Activated CD4-positive, alpha-beta T cell treated with anti-CD3 and anti-CD28 coated beads for 36 hours (primary cell): ENCODE measurements at regions of chr19 and their contacts with region 1.

Region 1: GRCh38 chr19:11558881-11559828 is at the start of gene ELOF1:
- DNase-seq: peak; percentile 99
- ATAC-seq: peak; percentile 93
- H3K4me3 Mint-ChIP-seq: peak within 1 kb of the TSS; percentile 90
- H3K27ac Mint-ChIP-seq: peak within 1 kb of the TSS; percentile 94
- H3K4me1 Mint-ChIP-seq: peaks cover 44% of the 10 kb centered on the region
- H3K27me3 Mint-ChIP-seq: no peaks in the 10 kb centered on the region
- total RNA-seq, gene ELOF1: 48.0 to 53.7 TPM

Region 2: DNA sequence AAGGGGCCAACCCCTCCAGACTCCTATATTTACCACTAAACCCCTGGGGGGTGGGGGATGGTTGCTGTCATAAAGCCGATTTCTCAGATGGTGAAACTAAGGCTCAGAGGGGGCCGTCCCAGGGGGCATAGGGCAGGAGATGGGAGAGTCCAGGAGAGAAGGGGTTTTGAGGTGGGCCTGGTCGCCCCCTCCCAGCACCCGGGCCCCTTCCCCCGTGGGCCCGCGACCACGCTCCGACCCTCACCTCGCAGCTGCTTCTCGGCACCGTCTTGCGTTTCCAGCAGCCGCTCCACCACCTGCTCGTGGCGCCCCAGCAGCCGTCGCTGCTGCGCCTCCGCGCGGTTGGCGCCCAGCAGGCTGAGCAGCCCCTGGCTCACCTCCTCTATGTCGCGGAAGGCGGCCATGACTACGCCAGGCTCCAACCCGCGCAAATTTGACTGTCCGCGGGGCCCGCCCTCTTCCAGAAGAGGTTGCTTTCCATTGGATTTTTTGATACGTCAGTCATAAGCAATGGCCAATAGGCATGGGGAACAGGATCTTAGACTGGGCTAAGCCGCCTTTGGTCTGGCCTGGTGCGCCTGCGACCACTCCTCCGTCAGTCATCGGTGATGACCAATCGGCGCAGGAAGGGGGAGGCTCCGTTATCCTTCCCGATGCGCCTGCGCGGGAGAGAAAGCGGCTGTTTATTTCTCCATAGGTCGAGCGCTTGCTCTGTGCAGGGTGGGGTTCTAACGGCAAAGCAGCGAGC is 403.6 kb before region 1 on chr19 and contains the start of gene SPC24:
- CTCF ChIA-PET with region 1: no interaction called
- POLR2A ChIA-PET with region 1: no interaction called
- intact Hi-C with region 1: loop called in 1 of 2 experiments (anchors 2 kb)
- DNase-seq: peak; percentile 97
- ATAC-seq: peak; percentile 99
- H3K4me3 Mint-ChIP-seq: peak within 1 kb of the TSS; percentile 79
- H3K27ac Mint-ChIP-seq: peak within 1 kb of the TSS; percentile 80
- H3K4me1 Mint-ChIP-seq: peaks cover 12% of the 10 kb centered on the region
- H3K27me3 Mint-ChIP-seq: no peaks in the 10 kb centered on the region
- total RNA-seq, gene SPC24: 59.6 to 72.2 TPM

Region 3: GRCh38 chr19:11355160-11356073 is 203.7 kb before region 1 on chr19 and contains the start of gene PLPPR2:
- CTCF ChIA-PET with region 1: no interaction called
- POLR2A ChIA-PET with region 1: no interaction called
- intact Hi-C with region 1: no loop called
- DNase-seq: peak; percentile 92
- ATAC-seq: peak; percentile 95
- H3K4me3 Mint-ChIP-seq: peak within 1 kb of the TSS; percentile 43
- H3K27ac Mint-ChIP-seq: peak within 1 kb of the TSS; percentile 23
- H3K4me1 Mint-ChIP-seq: peaks cover 7% of the 10 kb centered on the region
- H3K27me3 Mint-ChIP-seq: peaks cover 13% of the 10 kb centered on the region
- total RNA-seq, gene PLPPR2: 2.1 to 2.2 TPM

Region 4: DNA sequence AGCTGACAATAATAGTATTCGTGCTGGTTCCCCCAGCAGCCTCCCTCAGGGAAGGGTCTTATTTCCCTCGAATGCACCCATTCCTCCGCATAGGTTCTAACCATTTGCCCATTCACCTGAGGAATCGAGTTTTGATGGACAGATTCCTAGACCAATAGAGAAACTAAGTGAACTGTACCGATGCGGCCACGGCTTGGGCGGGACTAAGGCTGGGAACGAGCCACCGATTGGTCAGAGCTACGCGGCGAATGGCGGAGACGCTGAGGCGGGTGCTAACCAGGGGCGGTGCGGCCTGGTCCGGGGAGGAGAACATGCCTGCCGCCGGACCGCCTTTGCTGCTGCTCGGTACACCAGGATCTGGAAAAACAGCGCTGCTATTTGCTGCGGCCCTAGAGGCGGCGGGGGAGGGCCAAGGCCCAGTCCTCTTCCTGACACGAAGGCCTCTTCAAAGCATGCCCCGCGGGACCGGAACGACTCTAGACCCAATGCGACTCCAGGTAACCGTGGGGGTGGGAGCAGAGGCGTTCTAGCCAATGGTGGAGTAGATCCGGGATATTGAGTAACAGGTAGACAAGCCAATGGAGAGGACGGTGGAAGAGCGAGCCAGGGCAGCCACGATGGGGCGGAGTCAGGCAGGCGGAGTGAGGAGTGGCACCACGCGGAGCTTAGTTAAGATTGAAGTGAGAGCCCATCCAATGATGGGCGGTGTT is 184.6 kb before region 1 on chr19 and contains the start of gene SWSAP1:
- CTCF ChIA-PET with region 1: no interaction called
- POLR2A ChIA-PET with region 1: no interaction called
- intact Hi-C with region 1: loop called in 1 of 2 experiments (anchors 1 kb)
- DNase-seq: peak; percentile 98
- ATAC-seq: peak; percentile 92
- H3K4me3 Mint-ChIP-seq: no peak within 1 kb of the TSS
- H3K27ac Mint-ChIP-seq: no peak within 1 kb of the TSS
- H3K4me1 Mint-ChIP-seq: peaks cover 28% of the 10 kb centered on the region
- H3K27me3 Mint-ChIP-seq: no peaks in the 10 kb centered on the region
- total RNA-seq, gene SWSAP1: 1.5 to 1.7 TPM

Region 5: DNA sequence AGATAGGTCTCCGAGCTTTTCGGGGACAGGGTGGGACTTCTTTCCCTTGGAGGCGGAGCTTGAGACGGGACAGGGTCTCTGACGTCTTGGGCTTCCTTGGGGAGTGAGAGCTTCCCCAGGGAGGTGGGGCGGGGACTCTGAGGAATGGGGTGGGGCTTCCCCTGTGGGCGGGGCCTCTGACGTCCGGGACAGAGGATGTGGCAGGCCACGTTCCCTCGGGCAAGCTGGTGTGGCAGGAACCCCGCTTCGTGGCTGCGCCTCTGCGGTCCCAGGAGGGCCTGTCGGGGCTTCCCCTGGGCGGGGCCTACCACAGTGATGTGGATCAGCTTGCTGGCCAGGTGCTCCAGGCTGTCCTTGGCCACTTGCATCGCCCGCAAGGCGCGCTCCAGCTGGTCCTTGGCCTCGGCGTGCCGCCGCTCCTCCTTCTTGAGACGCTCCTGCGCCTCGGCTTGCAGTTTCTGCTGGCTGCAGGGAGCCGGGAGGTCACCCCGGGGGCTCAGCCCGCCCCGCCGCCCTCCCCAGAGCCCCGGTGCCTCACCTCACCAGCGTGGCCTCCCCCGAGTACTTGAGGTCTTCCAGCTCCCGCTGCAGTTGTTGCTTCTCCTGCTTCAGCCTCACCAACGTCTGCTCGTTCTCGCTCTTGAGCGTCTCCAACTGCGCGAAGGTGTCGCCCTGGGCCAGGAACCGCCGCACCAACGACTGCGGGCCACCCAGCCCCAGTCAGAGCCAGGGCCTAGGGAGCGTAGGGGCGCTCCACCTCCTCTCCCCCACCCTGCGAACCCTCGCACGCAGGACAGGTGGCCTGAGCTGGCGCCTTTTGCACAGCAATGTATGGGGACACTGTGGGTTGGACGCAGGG is 136.8 kb before region 1 on chr19:
- CTCF ChIA-PET with region 1: no interaction called
- POLR2A ChIA-PET with region 1: no interaction called
- intact Hi-C with region 1: no loop called
- DNase-seq: peak; percentile 82
- ATAC-seq: peak; percentile 78
- H3K4me3 Mint-ChIP-seq: peak overlapping the region; percentile 52
- H3K27ac Mint-ChIP-seq: no peak overlapping the region
- H3K4me1 Mint-ChIP-seq: peaks cover 31% of the 10 kb centered on the region
- H3K27me3 Mint-ChIP-seq: peaks cover 54% of the 10 kb centered on the region

Region 6: DNA sequence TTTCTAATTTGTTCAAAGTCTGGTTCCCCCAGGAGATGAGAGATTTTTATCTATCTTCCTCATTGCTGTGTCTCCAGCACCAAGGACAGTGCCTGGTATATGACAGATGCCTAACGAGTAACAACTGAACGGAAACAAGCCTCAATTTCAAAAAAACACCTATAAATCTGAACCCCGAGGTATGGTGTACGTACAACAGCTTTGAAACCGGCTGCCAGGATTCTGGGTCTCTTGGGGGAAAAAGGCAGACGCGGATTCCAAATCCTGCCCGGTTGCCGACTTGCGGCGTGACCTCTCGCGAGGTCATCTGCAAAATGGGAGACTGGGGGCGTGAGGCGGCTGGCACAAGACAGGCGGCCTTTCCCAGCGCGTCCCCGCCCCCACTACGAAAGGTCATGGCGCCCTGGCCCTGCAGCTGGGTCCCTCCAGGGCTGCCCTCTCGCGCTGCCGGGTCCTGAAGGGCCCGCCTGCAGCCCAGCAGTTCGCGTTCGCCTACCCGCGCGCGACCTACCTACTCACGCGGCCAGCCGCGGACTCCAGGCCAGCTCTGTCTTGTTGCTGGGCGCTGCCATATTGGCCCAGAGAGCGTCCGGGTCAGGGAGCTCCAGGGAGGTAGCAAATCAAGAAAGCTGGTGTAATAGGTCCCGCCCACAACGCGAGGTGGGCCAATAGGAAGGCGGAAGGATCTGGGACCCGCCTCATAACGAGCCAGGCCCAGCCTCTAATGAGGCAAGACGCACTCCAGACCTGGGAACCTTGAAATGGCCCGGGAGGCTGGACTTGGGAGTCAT is 30.4 kb before region 1 on chr19 and contains the start of gene ECSIT:
- CTCF ChIA-PET with region 1: interaction called, 7 read pairs
- POLR2A ChIA-PET with region 1: interaction called, 8 read pairs
- intact Hi-C with region 1: loop called (anchors 1 kb)
- DNase-seq: peak; percentile 97
- ATAC-seq: peak; percentile 97
- H3K4me3 Mint-ChIP-seq: peak within 1 kb of the TSS; percentile 99
- H3K27ac Mint-ChIP-seq: peak within 1 kb of the TSS; percentile 96
- H3K4me1 Mint-ChIP-seq: peaks cover 28% of the 10 kb centered on the region
- H3K27me3 Mint-ChIP-seq: no peaks in the 10 kb centered on the region
- total RNA-seq, gene ECSIT: 37.2 to 44.6 TPM

Region 7: GRCh38 chr19:11581740-11582139 is 22.6 kb after region 1 on chr19:
- CTCF ChIA-PET with region 1: interaction called, 12 read pairs
- POLR2A ChIA-PET with region 1: interaction called, 6 read pairs
- intact Hi-C with region 1: loop called (anchors 1 kb)
- DNase-seq: peak; percentile 74
- ATAC-seq: peak; percentile 85
- H3K4me3 Mint-ChIP-seq: peak overlapping the region; percentile 61
- H3K27ac Mint-ChIP-seq: peak overlapping the region; percentile 97
- H3K4me1 Mint-ChIP-seq: peaks cover 25% of the 10 kb centered on the region
- H3K27me3 Mint-ChIP-seq: no peaks in the 10 kb centered on the region

Region 8: DNA sequence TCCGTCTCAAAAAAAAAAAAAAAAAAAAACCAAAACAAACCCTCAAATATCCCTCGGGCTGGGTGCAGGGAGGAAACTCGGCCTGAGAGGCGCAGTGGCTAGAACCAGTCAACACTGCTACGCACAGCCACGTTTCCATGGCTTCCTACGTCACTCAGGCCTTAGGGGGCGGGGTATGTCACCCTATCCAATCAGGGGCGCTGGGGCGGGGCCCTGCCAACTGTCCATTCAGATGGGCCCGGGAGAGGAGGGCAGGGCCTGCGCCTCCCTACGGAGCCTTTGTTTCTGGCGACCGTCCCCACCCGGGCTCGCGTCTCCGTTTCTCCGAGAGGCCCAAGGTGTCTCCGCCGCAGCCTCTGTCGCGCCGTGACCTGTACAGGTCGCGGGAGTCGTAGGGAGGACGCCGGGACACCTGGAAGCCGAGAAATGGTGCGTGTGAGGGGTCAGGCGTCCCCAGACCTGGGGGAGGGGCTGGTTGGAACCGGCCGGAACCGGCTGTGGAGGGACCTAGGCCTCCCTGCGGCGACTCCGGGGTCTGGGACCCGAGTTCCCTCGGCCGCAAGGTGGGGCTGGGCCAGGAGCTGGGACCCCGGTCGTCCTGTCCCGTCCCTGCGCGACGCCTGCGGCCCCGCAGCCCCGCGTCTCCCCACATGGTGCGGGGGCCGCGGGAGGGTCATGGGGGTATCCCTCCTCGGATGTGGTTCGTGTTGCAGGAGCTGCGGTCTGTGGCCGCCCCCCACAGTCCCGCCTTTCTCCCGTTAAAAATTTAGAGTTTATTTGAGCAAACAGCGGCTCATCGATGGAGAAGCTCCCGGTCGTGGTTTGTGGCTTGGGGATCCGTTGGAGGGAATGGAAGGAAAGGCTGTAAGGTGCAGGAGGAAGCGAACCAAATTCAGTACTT is 38.3 kb after region 1 on chr19 and contains the start of gene ZNF627:
- CTCF ChIA-PET with region 1: interaction called, 13 read pairs
- POLR2A ChIA-PET with region 1: no interaction called
- intact Hi-C with region 1: loop called in 1 of 2 experiments (anchors 1 kb)
- DNase-seq: peak; percentile 99
- ATAC-seq: peak; percentile 100
- H3K4me3 Mint-ChIP-seq: peak within 1 kb of the TSS; percentile 97
- H3K27ac Mint-ChIP-seq: peak within 1 kb of the TSS; percentile 91
- H3K4me1 Mint-ChIP-seq: peaks cover 34% of the 10 kb centered on the region
- H3K27me3 Mint-ChIP-seq: no peaks in the 10 kb centered on the region
- total RNA-seq, gene ZNF627: 6.4 to 6.7 TPM

Region 9: DNA sequence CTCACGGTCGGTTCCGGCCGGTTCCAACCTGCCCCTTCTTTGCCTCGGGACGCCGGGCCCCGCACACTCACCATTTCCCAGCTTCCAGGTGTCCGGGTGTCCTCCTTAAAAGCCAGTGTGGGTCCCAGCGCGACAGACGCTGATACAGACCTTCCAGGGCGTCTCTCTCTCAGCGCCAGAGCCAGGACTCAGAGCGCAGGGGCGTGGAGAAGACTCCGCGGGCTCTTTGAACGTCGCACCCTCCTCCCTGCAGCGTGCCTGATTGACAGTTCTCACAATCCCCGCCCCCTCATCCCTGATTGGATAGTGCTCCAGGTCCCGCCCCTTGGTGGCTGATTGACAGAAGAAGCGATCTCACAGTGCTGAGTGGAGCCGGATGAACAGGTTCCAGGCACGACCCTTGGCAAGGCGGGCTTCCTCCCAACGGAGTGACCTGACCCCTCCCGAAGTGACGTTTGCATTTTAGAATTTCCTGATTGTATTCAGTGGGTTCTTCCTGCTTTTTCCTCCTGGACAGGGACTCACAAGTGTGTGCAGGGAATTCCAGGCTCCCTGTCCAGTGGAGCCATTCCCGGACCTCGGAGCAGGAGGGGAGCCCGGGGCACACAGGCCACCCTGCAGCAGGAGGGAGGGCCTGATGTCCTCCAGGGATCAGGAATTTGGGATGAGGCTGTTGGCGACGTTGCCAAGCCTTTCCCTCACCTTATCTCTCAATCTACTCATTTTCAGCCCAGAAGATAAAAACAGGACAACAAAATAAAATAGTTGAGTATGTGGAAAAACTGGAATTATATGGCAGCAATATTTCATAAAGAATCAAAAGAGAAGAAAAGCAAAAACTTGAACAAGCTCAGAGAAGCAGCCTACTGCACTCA is 179.8 kb after region 1 on chr19 and contains the start of gene ZNF823:
- CTCF ChIA-PET with region 1: no interaction called
- POLR2A ChIA-PET with region 1: no interaction called
- intact Hi-C with region 1: loop called in 1 of 2 experiments (anchors 1 kb)
- DNase-seq: peak; percentile 99
- ATAC-seq: peak; percentile 100
- H3K4me3 Mint-ChIP-seq: peak within 1 kb of the TSS; percentile 99
- H3K27ac Mint-ChIP-seq: peak within 1 kb of the TSS; percentile 92
- H3K4me1 Mint-ChIP-seq: peaks cover 16% of the 10 kb centered on the region
- H3K27me3 Mint-ChIP-seq: no peaks in the 10 kb centered on the region
- total RNA-seq, gene ZNF823: 2.9 to 3.0 TPM